Upper lobe of right lung (tissue), 1 donor: ENCODE measurements at regions of chr15 and their contacts with region 1.

Region 1: DNA sequence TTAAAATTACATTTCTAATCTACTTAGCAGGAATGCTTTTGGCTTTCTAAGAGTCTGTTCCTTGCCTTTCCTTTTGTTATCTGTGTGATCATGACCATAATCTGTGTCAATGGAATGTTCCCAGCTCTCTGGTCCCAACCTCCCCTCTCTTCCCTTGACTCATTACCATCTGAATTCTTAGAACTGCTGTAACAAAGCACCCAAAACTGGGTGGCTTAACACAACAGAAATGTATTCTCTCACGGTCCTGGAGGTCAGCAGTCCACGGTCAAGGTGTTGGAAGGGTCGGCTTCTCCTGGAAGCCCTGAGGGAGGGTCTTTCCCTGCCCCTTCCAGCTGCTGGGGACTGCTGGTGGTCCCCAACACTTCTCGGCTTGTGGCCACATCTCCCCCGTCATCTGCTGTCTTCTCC is 81.1 kb downstream of the LRRK1 start:
- DNase-seq: no peak
- ATAC-seq: no peak
- H3K4me3 ChIP-seq: no peak overlapping the region
- H3K27ac ChIP-seq: no peak overlapping the region
- H3K4me1 ChIP-seq: no peaks in the 10 kb centered on the region
- H3K27me3 ChIP-seq: no peaks in the 10 kb centered on the region
- CTCF ChIP-seq: no peak

Region 2: DNA sequence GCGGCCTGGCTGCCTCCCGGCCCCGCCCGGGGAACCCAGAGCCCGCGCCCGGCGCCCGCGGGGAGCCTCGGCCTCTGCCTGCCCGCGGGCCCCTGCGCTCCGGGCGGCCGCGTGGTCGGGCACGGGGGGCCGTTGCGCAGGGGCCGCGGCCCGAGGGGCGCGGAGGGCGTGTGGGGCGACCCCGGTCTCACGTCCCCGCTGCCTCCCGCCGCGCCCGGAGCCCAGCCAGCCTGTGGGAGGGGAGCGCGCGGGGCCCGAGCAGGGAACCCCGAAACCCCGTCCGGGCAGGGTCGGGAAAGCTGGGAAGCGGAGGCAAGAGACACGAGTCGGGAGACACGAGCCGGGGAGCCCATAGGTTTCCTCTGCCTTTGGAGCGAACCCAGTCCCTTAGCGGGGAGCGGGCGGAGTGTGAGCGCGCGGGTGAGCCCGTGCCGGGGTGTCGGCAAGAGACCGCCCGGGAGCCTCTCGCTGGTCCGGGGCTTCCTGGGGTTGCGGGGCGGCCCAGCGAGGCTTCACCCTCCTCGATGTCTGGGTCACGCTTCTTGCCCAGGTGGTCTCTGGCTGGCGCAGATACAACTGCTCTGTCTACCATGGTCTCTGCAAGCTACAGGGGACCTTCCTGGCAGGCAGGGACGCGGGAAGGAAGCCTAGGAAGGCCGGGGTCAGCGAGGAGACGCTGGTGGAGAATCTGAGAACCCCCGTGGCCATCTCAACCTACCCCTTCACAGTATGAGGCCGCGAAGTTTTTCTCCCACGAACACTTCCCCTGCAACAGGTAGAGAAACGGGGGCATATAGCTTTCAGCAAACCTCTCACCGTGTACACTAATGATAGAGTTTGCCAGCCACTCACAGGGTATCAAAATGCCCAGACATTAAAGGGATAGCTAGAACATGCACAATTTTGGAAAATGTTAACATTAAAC is 80.5 kb before region 1 on chr15:
- intact Hi-C with region 1: loop called (anchors 5 kb)
- DNase-seq: peak; percentile 73
- ATAC-seq: peak; percentile 8
- H3K4me3 ChIP-seq: peak overlapping the region; percentile 65
- H3K27ac ChIP-seq: peak overlapping the region; percentile 63
- H3K4me1 ChIP-seq: peaks cover 19% of the 10 kb centered on the region
- H3K27me3 ChIP-seq: no peaks in the 10 kb centered on the region
- CTCF ChIP-seq: no peak